ENCODE measurements at regions of chr6 and their contacts with region 1.

Region 1: GRCh38 chr6:24283043-24283985 is 74.5 kb downstream of the DCDC2 start:
- DNase-seq: peak; percentile 89
- H3K4me3 Mint-ChIP-seq: no peak overlapping the region
- H3K27ac Mint-ChIP-seq: no peak overlapping the region
- H3K4me1 Mint-ChIP-seq: no peaks in the 10 kb centered on the region
- H3K27me3 Mint-ChIP-seq: no peaks in the 10 kb centered on the region
- CTCF ChIP-seq: peak; percentile 86

Region 2: DNA sequence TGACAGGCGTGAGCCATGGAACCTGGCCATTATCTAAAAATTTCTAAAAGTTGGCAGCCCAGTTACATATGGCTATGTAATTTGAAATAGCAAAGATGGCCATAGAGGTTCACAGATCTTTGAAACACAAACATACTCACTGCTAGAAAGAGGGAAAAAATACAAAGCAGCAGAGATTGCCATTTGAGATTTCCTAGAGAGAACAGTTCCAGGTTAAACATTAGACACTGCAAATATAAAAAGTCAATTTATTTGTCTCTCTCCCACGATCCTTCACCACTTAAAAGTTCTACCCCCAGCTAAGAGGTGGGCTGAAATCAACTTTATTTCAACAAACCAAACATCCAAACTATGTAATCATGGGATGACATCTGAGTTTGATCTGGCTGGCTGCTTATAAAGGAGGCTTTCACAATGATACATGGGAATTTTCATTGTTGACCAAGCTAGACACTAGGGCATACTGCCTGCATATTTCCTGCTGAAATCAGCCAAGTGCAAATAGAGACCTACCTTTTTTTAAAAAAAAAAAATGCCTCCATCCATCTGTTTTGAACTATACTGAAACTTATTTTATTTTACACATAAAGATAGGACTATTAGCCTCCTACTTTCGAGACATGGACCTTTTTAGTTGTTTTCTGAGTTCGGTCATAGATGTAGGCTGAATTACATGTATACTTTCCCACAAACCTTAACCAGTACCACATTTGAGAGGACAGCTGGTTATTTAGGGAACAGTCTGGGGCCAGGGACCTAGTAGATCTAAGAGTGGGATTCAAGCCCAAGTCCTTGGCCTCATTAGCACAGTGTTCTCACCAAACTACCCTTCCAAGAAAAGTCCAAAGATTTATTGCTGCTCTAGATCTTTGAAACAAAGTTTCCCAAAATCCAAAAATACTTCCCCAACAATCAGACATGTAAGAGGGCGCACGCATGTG is 58.0 kb after region 1 on chr6:
- CTCF ChIA-PET with region 1: interaction called, 14 read pairs
- intact Hi-C with region 1: loop called (anchors 1 kb)
- DNase-seq: peak; percentile 67
- H3K4me3 Mint-ChIP-seq: peak overlapping the region; percentile 27
- H3K27ac Mint-ChIP-seq: peak overlapping the region; percentile 80
- H3K4me1 Mint-ChIP-seq: peaks cover 69% of the 10 kb centered on the region
- H3K27me3 Mint-ChIP-seq: no peaks in the 10 kb centered on the region
- CTCF ChIP-seq: no peak

Region 3: DNA sequence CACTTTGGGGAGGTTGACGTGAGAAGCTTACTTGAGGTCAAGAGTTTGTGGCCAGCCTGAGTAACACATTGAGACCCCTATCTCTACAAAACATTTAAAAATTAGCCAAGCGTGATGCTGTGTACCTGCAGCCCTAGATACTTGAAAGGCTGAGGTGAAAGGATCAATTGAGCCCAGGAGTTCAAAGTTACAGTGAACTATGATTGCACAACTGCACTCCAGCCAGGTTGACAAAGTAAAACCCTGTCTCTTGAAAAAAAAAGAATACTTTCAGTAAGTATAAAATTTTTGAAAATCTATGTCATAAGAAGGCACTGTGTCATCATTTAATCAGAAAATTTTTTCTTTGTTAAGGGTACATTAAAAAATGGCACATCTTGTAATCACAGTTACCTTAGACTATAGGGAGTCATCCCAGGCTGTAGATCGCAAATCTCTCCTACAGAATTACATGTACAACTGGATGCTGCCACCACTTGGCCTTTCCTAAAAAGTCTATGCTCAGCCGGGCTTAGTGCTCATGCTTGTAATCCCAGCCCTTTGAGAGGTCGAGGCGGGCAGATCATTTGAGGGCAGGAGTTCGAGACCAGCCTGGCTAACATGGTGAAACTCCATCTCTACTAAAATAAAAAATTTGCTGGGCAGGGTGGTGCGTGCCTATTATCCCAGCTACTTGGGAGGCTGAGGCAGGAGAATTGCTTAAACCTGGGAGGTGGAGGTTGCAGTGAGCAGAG is 102.4 kb after region 1 on chr6:
- CTCF ChIA-PET with region 1: interaction called, 121 read pairs
- intact Hi-C with region 1: loop called (anchors 1 kb)
- DNase-seq: peak; percentile 60
- H3K4me3 Mint-ChIP-seq: peak overlapping the region; percentile 3
- H3K27ac Mint-ChIP-seq: peak overlapping the region; percentile 72
- H3K4me1 Mint-ChIP-seq: peaks cover 66% of the 10 kb centered on the region
- H3K27me3 Mint-ChIP-seq: no peaks in the 10 kb centered on the region
- CTCF ChIP-seq: no peak

Region 4: GRCh38 chr6:24402697-24403501 is 119.6 kb after region 1 on chr6 and contains the start of gene MRS2:
- CTCF ChIA-PET with region 1: interaction called, 12 read pairs
- intact Hi-C with region 1: no loop called
- DNase-seq: peak; percentile 97
- H3K4me3 Mint-ChIP-seq: peak within 1 kb of the TSS; percentile 97
- H3K27ac Mint-ChIP-seq: peak within 1 kb of the TSS; percentile 85
- H3K4me1 Mint-ChIP-seq: peaks cover 32% of the 10 kb centered on the region
- H3K27me3 Mint-ChIP-seq: no peaks in the 10 kb centered on the region
- CTCF ChIP-seq: no peak
- total RNA-seq, gene MRS2: 56.0 and 56.7 TPM in 2 replicates

Region 5: GRCh38 chr6:24428628-24429027 is 145.3 kb after region 1 on chr6:
- CTCF ChIA-PET with region 1: no interaction called
- intact Hi-C with region 1: no loop called
- DNase-seq: no peak
- H3K4me3 Mint-ChIP-seq: no peak overlapping the region
- H3K27ac Mint-ChIP-seq: no peak overlapping the region
- H3K4me1 Mint-ChIP-seq: peaks cover 9% of the 10 kb centered on the region
- H3K27me3 Mint-ChIP-seq: no peaks in the 10 kb centered on the region
- CTCF ChIP-seq: no peak